ENCODE measurements at regions of chr1 and their contacts with region 1.

Region 1: GRCh38 chr1:178774263-178774662 is 49.2 kb downstream of the RALGPS2 start:
- DNase-seq: peak; percentile 28
- ATAC-seq: no peak
- H3K4me3 ChIP-seq: no peak overlapping the region
- H3K27ac ChIP-seq: no peak overlapping the region
- H3K4me1 ChIP-seq: peaks cover 2% of the 10 kb centered on the region; the same call in 1 of the 2 replicates
- H3K27me3 ChIP-seq: no peaks in the 10 kb centered on the region
- CTCF ChIP-seq: peak; percentile 38; the same call in 1 of the 2 replicates
- POLR2A ChIP-seq: no peak
- RAD21 ChIP-seq: peak; percentile 43

Region 2: GRCh38 chr1:178789201-178789600 is 14.9 kb after region 1 on chr1:
- CTCF ChIA-PET with region 1: interaction called, 3 read pairs
- POLR2A ChIA-PET with region 1: no interaction called
- dilution Hi-C with region 1: no loop called
- in situ Hi-C with region 1: no loop called
- intact Hi-C with region 1: loop called (anchors 2 kb)
- DNase-seq: no peak
- ATAC-seq: no peak
- H3K4me3 ChIP-seq: no peak overlapping the region
- H3K27ac ChIP-seq: no peak overlapping the region
- H3K4me1 ChIP-seq: no peaks in the 10 kb centered on the region
- H3K27me3 ChIP-seq: no peaks in the 10 kb centered on the region
- CTCF ChIP-seq: no peak
- POLR2A ChIP-seq: no peak
- RAD21 ChIP-seq: no peak

Measured in IMR-90 (cell line).